Aorta (tissue), 5 donors: ENCODE measurements at regions of chr6 and their contacts with region 1.

Region 1: GRCh38 chr6:53986165-53986720 is 125.0 kb upstream of the MLIP start:
- DNase-seq: no peak
- ATAC-seq: peak; percentile 65
- H3K4me3 ChIP-seq: no peak overlapping the region
- H3K27ac ChIP-seq: no peak overlapping the region
- H3K4me1 ChIP-seq: peaks cover 0 to 4% of the 10 kb centered on the region in 2 donors
- H3K27me3 ChIP-seq: no peaks in the 10 kb centered on the region

Region 2: DNA sequence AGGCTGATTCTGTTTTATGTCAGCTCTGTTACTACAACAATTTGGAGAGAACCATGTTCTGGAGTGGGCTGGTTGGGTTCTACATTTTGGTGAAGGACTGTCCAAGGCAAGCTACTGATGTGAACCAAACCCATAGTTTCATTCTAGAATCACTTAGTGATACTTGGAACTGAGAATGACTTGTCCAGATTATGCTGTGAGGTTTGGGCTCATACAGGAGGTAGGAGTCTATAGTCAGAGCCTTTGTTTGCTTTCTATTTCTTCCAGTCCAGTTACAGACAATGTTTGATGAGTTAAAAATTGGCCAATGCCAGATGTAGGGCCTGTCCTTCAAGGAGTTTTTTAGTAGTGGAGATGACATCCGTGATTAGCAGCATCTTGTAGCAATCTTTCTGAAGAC is 93.5 kb before region 1 on chr6:
- intact Hi-C with region 1: no loop called
- DNase-seq: no peak
- ATAC-seq: no peak
- H3K4me3 ChIP-seq: no peak overlapping the region
- H3K27ac ChIP-seq: no peak overlapping the region
- H3K4me1 ChIP-seq: peaks cover 2 to 7% of the 10 kb centered on the region in 2 donors
- H3K27me3 ChIP-seq: no peaks in the 10 kb centered on the region

Region 3: GRCh38 chr6:54719633-54720032 is 733.4 kb after region 1 on chr6:
- intact Hi-C with region 1: loop called in 1 of 2 experiments (anchors 10 kb)
- DNase-seq: no peak
- ATAC-seq: no peak
- H3K4me3 ChIP-seq: no peak overlapping the region
- H3K27ac ChIP-seq: no peak overlapping the region
- H3K4me1 ChIP-seq: no peaks in the 10 kb centered on the region
- H3K27me3 ChIP-seq: no peaks in the 10 kb centered on the region

Region 4: GRCh38 chr6:55069132-55069781 is 1083.0 kb after region 1 on chr6:
- intact Hi-C with region 1: loop called (anchors 2 to 5 kb)
- DNase-seq: no peak
- ATAC-seq: no peak
- H3K4me3 ChIP-seq: no peak overlapping the region
- H3K27ac ChIP-seq: no peak overlapping the region
- H3K4me1 ChIP-seq: no peaks in the 10 kb centered on the region
- H3K27me3 ChIP-seq: no peaks in the 10 kb centered on the region

Region 5: GRCh38 chr6:55239099-55239498 is 1252.9 kb after region 1 on chr6:
- intact Hi-C with region 1: loop called (anchors 5 to 10 kb)
- DNase-seq: no peak
- ATAC-seq: no peak
- H3K4me3 ChIP-seq: no peak overlapping the region
- H3K27ac ChIP-seq: no peak overlapping the region
- H3K4me1 ChIP-seq: no peaks in the 10 kb centered on the region
- H3K27me3 ChIP-seq: no peaks in the 10 kb centered on the region